GM10248 (cell line): ENCODE measurements at regions of chr12 and their contacts with region 1.

Region 1: GRCh38 chr12:51240954-51241353 is 2.3 kb downstream of the DAZAP2 start:
- DNase-seq: no peak
- CTCF ChIP-seq: no peak

Region 2: DNA sequence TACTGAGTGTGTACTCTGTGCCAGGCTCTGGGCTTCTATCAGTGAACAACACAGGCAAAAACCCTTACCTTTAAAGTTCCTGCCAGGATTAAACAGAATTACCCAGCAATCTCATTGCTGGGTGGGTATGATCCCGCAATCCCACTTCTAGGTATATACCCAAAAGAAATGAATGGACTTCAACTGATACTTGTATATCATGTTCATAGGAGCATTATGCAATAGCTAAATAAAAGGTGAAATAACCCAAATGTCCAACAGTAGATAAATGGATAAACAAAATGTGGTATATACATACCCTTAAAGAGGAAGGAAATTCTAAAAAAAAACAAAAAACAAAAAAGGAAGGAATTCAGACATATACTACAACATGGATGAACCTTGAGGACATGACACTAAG is 12.3 kb after region 1 on chr12:
- CTCF ChIA-PET with region 1: interaction called, 15 read pairs
- POLR2A ChIA-PET with region 1: interaction called, 6 read pairs
- DNase-seq: no peak
- CTCF ChIP-seq: no peak